ENCODE measurements at regions of chr14 and their contacts with region 1.

Region 1: DNA sequence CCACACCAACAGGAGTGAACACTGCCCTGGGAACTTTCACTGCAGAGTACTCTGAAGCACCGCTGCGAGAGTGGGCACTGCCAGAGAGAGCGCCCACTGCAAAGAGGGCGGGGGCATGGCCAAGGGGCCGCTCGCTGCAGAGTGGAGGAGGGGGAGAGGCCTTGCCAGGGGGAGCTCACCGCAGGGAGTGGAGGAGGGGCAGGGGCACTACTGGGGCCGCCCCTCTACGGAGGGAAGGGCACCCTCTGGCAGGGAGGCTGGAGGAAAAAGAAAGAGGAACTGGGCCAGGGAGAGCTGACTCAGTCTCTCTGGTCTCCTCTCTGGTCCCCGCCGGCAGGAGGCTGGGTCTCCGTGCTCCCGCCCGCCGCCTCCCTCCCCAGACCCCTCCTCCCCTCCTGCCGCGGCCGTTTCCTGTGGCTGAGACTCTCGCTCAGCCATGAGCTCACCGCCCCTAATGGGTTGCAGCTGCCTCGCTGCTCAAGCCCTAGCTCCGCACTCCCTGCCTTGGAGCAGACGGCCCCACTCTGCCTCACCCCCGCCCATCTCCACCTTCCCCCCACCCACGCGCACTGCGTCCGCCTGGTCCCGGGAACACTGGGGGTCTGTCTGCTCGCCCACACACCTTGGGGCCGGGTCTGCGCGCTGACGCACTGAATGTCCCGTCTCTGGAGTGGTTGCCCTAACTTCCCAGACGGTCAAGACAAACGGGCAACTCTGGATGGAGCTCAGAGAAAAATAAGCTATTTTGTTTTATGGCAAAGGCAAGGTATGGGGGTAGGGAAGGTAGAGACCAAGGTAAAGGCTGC is 1.3 kb downstream of the ARHGEF40 start:
- DNase-seq: peak in 4 of 5 donors; percentile 23 to 75 (median 32)
- H3K4me3 ChIP-seq: peak overlapping the region in 1 of 2 donors; percentile 42
- H3K4me3 Mint-ChIP-seq: peak overlapping the region; percentile 80 to 90 (median 86)
- H3K27ac ChIP-seq: peak overlapping the region; percentile 25
- H3K27ac Mint-ChIP-seq: peak overlapping the region in 6 of 7 donors; percentile 77 to 88 (median 83)
- H3K4me1 ChIP-seq: peaks cover 35% of the 10 kb centered on the region
- H3K4me1 Mint-ChIP-seq: peaks cover 22 to 41% (median 30%) of the 10 kb centered on the region in 4 donors
- H3K27me3 ChIP-seq: peaks cover 52% of the 10 kb centered on the region
- H3K27me3 Mint-ChIP-seq: peaks cover 29 to 50% of the 10 kb centered on the region in 2 donors

Region 2: GRCh38 chr14:20782280-20782890 is 289.0 kb before region 1 on chr14:
- CTCF ChIA-PET with region 1: no interaction called
- POLR2A ChIA-PET with region 1: no interaction called
- intact Hi-C with region 1: no loop called
- DNase-seq: peak in 4 of 5 donors; percentile 29 to 44 (median 35)
- H3K4me3 ChIP-seq: peak overlapping the region; percentile 23 to 68
- H3K4me3 Mint-ChIP-seq: peak overlapping the region; percentile 81 to 95 (median 86)
- H3K27ac ChIP-seq: peak overlapping the region; percentile 32
- H3K27ac Mint-ChIP-seq: peak overlapping the region; percentile 82 to 95 (median 86)
- H3K4me1 ChIP-seq: peaks cover 43% of the 10 kb centered on the region
- H3K4me1 Mint-ChIP-seq: peaks cover 25 to 50% (median 41%) of the 10 kb centered on the region in 4 donors
- H3K27me3 ChIP-seq: no peaks in the 10 kb centered on the region
- H3K27me3 Mint-ChIP-seq: no peaks in the 10 kb centered on the region

Region 3: DNA sequence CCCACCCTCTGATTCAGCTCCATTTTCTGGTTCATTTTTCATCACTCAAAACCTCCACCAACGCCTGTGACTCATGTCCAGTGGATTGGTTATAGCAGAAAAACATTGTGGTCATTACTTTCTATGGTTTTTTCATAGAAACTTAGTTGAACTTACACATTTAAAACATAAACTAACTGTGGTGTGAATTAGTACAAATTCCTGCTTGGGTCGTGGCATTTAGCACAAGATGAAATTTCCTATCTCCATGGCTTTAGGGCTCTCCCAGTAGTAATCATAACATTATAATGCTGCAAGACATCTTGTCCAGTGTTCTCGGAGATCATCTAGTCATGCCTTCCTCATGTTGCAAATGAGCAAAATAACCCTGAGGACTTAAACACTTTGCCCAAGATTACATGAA is 22.2 kb before region 1 on chr14:
- CTCF ChIA-PET with region 1: interaction called, 13 read pairs
- POLR2A ChIA-PET with region 1: interaction called, 6 read pairs
- intact Hi-C with region 1: no loop called
- DNase-seq: no peak
- H3K4me3 ChIP-seq: no peak overlapping the region
- H3K4me3 Mint-ChIP-seq: no peak overlapping the region
- H3K27ac ChIP-seq: no peak overlapping the region
- H3K27ac Mint-ChIP-seq: no peak overlapping the region
- H3K4me1 ChIP-seq: peaks cover 8% of the 10 kb centered on the region
- H3K4me1 Mint-ChIP-seq: peaks cover 6 to 14% (median 9%) of the 10 kb centered on the region in 4 donors
- H3K27me3 ChIP-seq: peaks cover 3% of the 10 kb centered on the region
- H3K27me3 Mint-ChIP-seq: peaks cover 3 to 8% of the 10 kb centered on the region in 2 donors

Region 4: GRCh38 chr14:21199611-21200560 is 128.5 kb after region 1 on chr14:
- CTCF ChIA-PET with region 1: no interaction called
- POLR2A ChIA-PET with region 1: no interaction called
- intact Hi-C with region 1: no loop called
- DNase-seq: no peak
- H3K4me3 ChIP-seq: no peak overlapping the region
- H3K4me3 Mint-ChIP-seq: no peak overlapping the region
- H3K27ac ChIP-seq: no peak overlapping the region
- H3K27ac Mint-ChIP-seq: no peak overlapping the region
- H3K4me1 ChIP-seq: no peaks in the 10 kb centered on the region
- H3K4me1 Mint-ChIP-seq: peaks cover 10 to 19% (median 16%) of the 10 kb centered on the region in 4 donors
- H3K27me3 ChIP-seq: no peaks in the 10 kb centered on the region
- H3K27me3 Mint-ChIP-seq: no peaks in the 10 kb centered on the region